GM12878 (cell line): ENCODE measurements at regions of chr1 and their contacts with region 1.

Region 1: GRCh38 chr1:203475012-203475981 is at the start of gene PRELP:
- DNase-seq: no peak
- ATAC-seq: no peak
- H3K4me3 ChIP-seq: no peak within 1 kb of the TSS
- H3K27ac ChIP-seq: no peak within 1 kb of the TSS
- H3K4me1 ChIP-seq: peaks cover 9% of the 10 kb centered on the region; the same call in 1 of the 2 replicates
- H3K27me3 ChIP-seq: peaks cover 2 to 6% of the 10 kb centered on the region in 2 experiments; a peak in 2 of 4 replicates
- CTCF ChIP-seq: no peak
- EP300 ChIP-seq: no peak
- POLR2A ChIP-seq: no peak
- RAD21 ChIP-seq: no peak
- polyA plus RNA-seq, gene PRELP: not detected

Region 2: DNA sequence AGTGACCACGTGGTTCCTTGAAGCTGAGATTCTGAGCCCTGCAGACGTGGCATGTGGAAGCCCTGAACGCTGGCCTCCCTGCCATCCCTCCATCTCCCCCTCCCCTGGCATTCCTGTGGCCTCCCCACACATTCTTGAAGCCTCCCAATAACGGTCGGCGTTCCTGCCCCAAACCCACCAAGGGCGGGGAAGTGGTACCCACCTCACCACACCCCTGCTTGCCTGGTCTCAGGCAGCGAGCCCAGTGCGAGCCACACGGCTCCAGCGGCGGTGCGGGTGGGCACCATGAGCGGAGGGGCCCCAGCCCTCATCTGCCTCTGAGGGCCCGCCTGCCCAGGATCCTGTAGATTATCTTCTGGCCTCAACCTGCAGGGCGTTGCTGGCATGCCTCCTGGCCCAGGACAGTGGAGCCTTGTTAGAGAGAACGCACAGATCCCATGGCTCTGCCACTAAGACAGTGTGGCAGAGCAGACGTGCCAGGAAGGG is 20.3 kb before region 1 on chr1:
- CTCF ChIA-PET with region 1: interaction called, 4 read pairs
- POLR2A ChIA-PET with region 1: interaction called, 5 read pairs
- RAD21 ChIA-PET with region 1: interaction called, 15 read pairs
- SMC1A ChIA-PET with region 1: interaction called, 16 read pairs
- in situ Hi-C with region 1: no loop called
- intact Hi-C with region 1: no loop called
- DNase-seq: no peak
- ATAC-seq: no peak
- H3K4me3 ChIP-seq: no peak overlapping the region
- H3K27ac ChIP-seq: no peak overlapping the region
- H3K4me1 ChIP-seq: peaks cover 3% of the 10 kb centered on the region; the same call in 1 of the 2 replicates
- H3K27me3 ChIP-seq: no peaks in the 10 kb centered on the region
- CTCF ChIP-seq: no peak
- EP300 ChIP-seq: no peak
- POLR2A ChIP-seq: no peak
- RAD21 ChIP-seq: no peak

Region 3: DNA sequence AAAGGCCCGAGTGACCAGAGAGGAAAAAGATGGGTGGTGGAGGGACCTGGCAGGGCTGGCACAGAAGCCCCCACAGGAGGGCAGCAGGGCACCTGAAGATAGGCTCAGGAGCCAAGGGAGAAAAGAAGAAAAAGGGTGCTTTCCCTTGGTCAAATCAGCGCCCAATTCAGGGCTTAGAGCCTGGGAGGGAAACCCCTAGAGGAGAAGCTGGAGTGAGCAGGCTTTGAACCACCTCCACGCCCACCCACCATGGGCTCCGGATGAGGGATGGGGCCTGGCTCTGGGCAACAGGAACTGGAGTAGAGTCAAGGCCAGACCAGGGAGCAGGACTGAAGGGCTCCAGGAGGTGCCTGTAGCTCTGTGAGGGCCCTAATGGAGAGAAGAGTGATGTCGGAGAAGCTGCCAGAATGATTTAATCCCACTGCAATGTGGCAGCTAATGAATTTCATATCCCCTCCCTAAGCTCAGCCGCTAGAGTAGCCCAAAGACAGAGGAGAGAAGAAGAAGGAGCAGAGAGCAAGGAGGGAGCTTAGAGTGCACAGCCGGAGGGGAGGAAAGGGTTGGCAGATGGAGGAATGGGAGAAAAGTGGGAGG is 11.7 kb before region 1 on chr1:
- CTCF ChIA-PET with region 1: interaction called, 11 read pairs
- POLR2A ChIA-PET with region 1: interaction called, 7 read pairs
- RAD21 ChIA-PET with region 1: interaction called, 15 read pairs
- SMC1A ChIA-PET with region 1: interaction called, 9 read pairs
- in situ Hi-C with region 1: no loop called
- intact Hi-C with region 1: no loop called
- DNase-seq: no peak
- ATAC-seq: peak; percentile 59
- H3K4me3 ChIP-seq: no peak overlapping the region
- H3K27ac ChIP-seq: no peak overlapping the region
- H3K4me1 ChIP-seq: no peaks in the 10 kb centered on the region
- H3K27me3 ChIP-seq: no peaks in the 10 kb centered on the region; a peak in 2 of 4 replicates
- CTCF ChIP-seq: peak; percentile 5 to 41 (median 13); a peak in 3 of 6 replicates
- EP300 ChIP-seq: no peak
- POLR2A ChIP-seq: no peak
- RAD21 ChIP-seq: no peak